IMR-90 (cell line): ENCODE measurements at regions of chr1 and their contacts with region 1.

Region 1: GRCh38 chr1:98794196-98794886 is 132.8 kb downstream of the SNX7 start:
- DNase-seq: peak; percentile 72
- ATAC-seq: peak; percentile 95
- H3K4me3 ChIP-seq: no peak overlapping the region
- H3K27ac ChIP-seq: no peak overlapping the region
- H3K4me1 ChIP-seq: no peaks in the 10 kb centered on the region
- H3K27me3 ChIP-seq: peaks cover 5% of the 10 kb centered on the region
- CTCF ChIP-seq: peak; percentile 81
- POLR2A ChIP-seq: no peak
- RAD21 ChIP-seq: peak; percentile 85

Region 2: DNA sequence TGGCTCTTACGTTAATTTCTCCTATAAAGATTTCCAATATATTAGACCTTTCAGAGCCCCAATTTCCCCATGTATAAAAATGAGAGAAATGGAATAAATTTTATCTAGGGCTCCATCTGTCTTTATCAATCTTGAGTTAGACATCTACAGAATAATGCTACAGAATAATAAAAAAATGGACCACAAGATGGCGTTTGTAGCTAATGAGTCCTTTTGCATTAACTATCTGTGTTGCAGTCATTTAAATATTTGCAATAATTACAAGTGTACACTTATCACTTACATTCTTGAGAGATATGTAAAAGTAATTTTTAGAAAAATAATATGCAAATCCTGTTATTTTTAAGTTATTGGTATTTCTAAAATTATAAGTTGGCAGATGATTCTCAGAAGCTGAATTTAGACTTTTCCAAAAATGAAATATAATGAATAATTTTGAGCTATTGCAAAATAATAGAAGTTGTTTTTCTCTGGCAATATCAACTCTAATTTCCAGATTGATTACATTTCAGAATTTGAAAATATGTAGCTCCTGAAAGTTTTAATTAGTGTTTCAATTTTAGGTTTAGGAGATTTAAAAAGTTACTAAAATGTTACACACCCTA is 45.1 kb before region 1 on chr1:
- CTCF ChIA-PET with region 1: interaction called, 10 read pairs
- POLR2A ChIA-PET with region 1: no interaction called
- dilution Hi-C with region 1: no loop called
- in situ Hi-C with region 1: no loop called
- intact Hi-C with region 1: loop called (anchors 1 kb)
- DNase-seq: peak; percentile 7
- ATAC-seq: no peak; the same call in 1 of the 2 replicates
- H3K4me3 ChIP-seq: no peak overlapping the region
- H3K27ac ChIP-seq: no peak overlapping the region
- H3K4me1 ChIP-seq: no peaks in the 10 kb centered on the region
- H3K27me3 ChIP-seq: no peaks in the 10 kb centered on the region
- CTCF ChIP-seq: peak; percentile 48
- POLR2A ChIP-seq: no peak
- RAD21 ChIP-seq: peak; percentile 39; the same call in 1 of the 2 replicates

Region 3: GRCh38 chr1:99004254-99004859 is 210.0 kb after region 1 on chr1:
- CTCF ChIA-PET with region 1: no interaction called
- POLR2A ChIA-PET with region 1: no interaction called
- dilution Hi-C with region 1: no loop called
- in situ Hi-C with region 1: no loop called
- intact Hi-C with region 1: loop called (anchors 10 kb)
- DNase-seq: peak; percentile 19
- ATAC-seq: peak; percentile 77
- H3K4me3 ChIP-seq: peak overlapping the region; percentile 24
- H3K27ac ChIP-seq: no peak overlapping the region
- H3K4me1 ChIP-seq: no peaks in the 10 kb centered on the region; the same call in 1 of the 2 replicates
- H3K27me3 ChIP-seq: peaks cover 33% of the 10 kb centered on the region
- CTCF ChIP-seq: no peak
- POLR2A ChIP-seq: no peak
- RAD21 ChIP-seq: no peak

Region 4: DNA sequence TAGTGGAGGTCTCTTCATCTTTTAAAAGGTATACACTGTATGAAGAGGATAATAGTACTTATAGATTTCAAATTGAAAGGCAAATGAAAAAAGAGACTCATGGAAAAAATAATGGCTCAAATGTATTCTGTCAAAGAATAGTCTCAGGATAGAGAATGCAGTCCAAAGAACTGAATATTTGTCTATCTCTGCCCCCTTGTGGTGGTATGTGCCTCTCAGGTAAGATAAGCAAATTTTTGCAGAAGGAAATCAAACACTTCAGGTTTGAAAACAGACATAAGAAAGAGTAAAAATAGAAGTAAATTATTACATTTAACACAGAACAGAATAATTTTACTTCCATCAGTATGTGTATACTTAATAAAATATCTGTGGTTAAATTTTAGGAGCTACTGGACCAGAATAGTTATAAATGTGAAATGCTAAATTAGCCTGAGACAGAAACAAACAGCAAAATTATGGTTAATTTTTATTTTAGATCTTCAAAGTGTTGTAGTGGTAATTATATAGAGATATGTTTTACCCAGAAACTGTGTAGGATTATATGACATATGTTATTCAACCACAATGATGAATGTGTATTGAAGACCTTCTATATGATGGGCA is 687.2 kb after region 1 on chr1:
- CTCF ChIA-PET with region 1: interaction called, 3 read pairs
- POLR2A ChIA-PET with region 1: no interaction called
- dilution Hi-C with region 1: no loop called
- in situ Hi-C with region 1: loop called (anchors 10 kb)
- intact Hi-C with region 1: loop called (anchors 1 kb)
- DNase-seq: peak; percentile 68
- ATAC-seq: peak; percentile 71; the same call in 1 of the 2 replicates
- H3K4me3 ChIP-seq: no peak overlapping the region
- H3K27ac ChIP-seq: no peak overlapping the region
- H3K4me1 ChIP-seq: no peaks in the 10 kb centered on the region
- H3K27me3 ChIP-seq: no peaks in the 10 kb centered on the region
- CTCF ChIP-seq: peak; percentile 83
- POLR2A ChIP-seq: no peak
- RAD21 ChIP-seq: peak; percentile 88

Region 5: DNA sequence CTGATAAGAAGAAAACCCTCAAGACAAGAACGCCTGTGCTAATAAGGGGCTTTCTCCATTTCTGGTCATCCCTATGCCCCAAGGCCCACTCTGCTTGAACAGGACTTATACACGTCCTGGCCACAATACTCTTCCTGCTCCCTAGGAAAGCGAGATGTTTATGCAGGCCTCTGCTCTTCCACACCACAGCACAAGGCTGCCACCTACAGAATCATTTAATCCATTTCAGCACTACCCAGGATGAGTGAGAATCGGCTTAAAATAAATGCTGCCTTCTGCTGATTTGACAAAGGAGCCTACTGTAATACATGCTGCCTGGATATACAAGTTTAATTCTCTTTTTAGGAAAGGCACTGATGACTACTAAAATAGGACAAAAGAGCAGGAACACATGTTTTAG is 942.7 kb after region 1 on chr1:
- CTCF ChIA-PET with region 1: no interaction called
- POLR2A ChIA-PET with region 1: no interaction called
- dilution Hi-C with region 1: no loop called
- in situ Hi-C with region 1: no loop called
- intact Hi-C with region 1: loop called (anchors 2 kb)
- DNase-seq: peak; percentile 77
- ATAC-seq: peak; percentile 100
- H3K4me3 ChIP-seq: no peak overlapping the region
- H3K27ac ChIP-seq: no peak overlapping the region
- H3K4me1 ChIP-seq: no peaks in the 10 kb centered on the region
- H3K27me3 ChIP-seq: no peaks in the 10 kb centered on the region
- CTCF ChIP-seq: peak; percentile 72
- POLR2A ChIP-seq: no peak
- RAD21 ChIP-seq: peak; percentile 81